Sigmoid colon (tissue), 7 donors: ENCODE measurements at regions of chr1 and their contacts with region 1.

Region 1: DNA sequence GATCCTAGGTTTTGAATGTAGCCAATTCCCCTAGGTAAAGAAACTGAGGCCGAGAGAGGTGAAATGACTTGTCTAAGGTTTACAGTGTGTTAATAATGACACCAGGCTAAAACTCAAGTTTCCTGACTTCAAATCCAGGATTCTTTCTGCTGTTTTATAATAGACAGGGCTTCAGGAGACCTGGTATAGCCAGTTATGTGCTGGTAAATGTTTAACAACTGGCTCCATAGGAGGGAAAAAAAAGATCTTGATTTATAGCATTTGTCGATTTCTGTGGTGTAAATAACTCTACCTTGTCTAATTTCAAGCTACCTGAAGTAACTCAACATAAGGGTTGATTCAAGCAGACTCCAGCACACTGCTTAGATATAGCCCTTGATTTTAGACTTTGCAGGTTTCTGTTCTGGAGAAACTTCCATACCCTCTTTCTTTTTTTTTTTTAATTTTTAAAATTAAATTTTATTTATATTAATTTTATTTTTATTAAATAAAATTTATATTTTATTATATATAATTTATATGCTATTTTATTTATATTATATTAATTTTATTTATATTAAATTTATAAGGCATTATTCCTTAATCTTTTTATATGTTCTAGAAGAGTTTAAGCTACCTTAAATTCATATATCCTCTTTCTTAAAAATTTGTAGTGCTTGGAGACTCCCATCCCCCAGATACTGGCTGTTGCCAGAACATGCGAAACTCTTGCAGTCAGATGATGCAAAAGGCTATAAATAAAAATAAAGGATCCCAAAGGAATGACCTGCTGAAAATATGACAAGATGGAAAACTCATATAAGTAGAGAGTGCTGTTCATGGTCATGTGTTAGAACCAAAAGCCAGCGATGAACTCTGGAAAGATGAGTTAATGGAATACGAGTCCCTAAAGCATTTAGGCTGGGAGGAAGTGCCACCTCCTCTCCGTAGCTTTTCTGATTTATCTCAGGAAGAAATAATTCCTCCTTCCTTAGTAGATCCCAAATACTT is 35.4 kb upstream of the SRSF10 start:
- DNase-seq: no peak
- H3K4me3 ChIP-seq: no peak overlapping the region
- H3K27ac ChIP-seq: peak overlapping the region; percentile 80 to 96 (median 88)
- H3K4me1 ChIP-seq: peaks cover 0 to 49% (median 44%) of the 10 kb centered on the region in 4 donors
- H3K27me3 ChIP-seq: no peaks in the 10 kb centered on the region
- CTCF ChIP-seq: no peak
- EP300 ChIP-seq: peak; percentile 9 to 96 (median 58)
- POLR2A ChIP-seq: no peak

Region 2: GRCh38 chr1:23979878-23980724 is 35.4 kb before region 1 on chr1 and contains the start of gene SRSF10:
- intact Hi-C with region 1: loop called (anchors 2 kb)
- DNase-seq: peak; percentile 100
- H3K4me3 ChIP-seq: peak within 1 kb of the TSS; percentile 80 to 97 (median 86)
- H3K27ac ChIP-seq: peak within 1 kb of the TSS; percentile 96 to 100 (median 98)
- H3K4me1 ChIP-seq: peaks cover 0 to 63% (median 53%) of the 10 kb centered on the region in 4 donors
- H3K27me3 ChIP-seq: no peaks in the 10 kb centered on the region
- CTCF ChIP-seq: peak in 1 of 4 experiments; percentile 33
- EP300 ChIP-seq: peak in 1 of 4 donors; percentile 62
- POLR2A ChIP-seq: peak; percentile 99
- total RNA-seq, gene SRSF10: 80.6 to 105 (median 93.9) TPM